Activated B cell treated with CpG ODN at 0.5 μM for 24 hours (primary cell): ENCODE measurements at regions of chr4 and their contacts with region 1.

Region 1: DNA sequence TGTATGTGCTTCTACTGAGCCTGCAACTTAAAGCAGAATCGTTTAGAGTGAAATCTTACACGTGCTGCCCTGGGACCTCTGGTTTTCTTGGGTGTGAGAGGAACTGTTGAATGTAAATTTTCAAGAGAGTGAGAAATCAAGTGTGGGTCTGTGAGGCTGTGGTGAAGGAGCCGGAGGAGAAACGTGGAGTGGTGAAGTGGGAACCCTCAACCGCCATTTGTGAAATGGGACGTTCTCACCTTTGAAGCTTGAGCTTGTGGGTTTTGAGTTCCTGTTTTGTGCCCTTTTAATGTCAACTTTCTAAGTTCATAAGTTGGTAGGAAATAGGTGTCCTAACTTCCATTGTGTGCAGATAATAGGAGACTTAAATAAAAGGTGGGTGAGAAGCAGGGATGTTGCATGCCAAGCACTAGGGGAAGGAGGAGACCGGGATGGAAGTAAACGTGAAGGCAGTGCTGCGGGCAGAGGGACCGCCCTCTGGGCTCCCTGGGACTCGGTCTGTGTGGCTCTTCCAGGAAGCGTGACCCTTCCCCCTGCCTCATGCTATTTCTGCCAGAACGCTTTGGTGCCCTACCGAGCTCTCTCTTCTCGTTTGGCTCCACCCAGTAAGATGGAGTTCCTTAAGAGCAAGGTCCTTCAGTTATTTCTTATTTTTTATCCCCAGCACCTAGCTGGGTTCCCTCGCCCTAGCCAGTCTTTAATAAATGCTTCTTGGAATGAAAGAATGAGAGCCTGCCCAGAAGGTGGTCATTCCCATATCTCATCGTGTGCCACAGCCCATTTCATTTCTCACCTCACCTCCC is 56.0 kb downstream of the TMEM131L start:
- DNase-seq: no peak
- ATAC-seq: peak; percentile 25
- H3K4me3 Mint-ChIP-seq: peak overlapping the region; percentile 71
- H3K27ac Mint-ChIP-seq: peak overlapping the region; percentile 90
- H3K4me1 Mint-ChIP-seq: peaks cover 99% of the 10 kb centered on the region
- H3K27me3 Mint-ChIP-seq: no peaks in the 10 kb centered on the region
- CTCF ChIP-seq: no peak

Region 2: DNA sequence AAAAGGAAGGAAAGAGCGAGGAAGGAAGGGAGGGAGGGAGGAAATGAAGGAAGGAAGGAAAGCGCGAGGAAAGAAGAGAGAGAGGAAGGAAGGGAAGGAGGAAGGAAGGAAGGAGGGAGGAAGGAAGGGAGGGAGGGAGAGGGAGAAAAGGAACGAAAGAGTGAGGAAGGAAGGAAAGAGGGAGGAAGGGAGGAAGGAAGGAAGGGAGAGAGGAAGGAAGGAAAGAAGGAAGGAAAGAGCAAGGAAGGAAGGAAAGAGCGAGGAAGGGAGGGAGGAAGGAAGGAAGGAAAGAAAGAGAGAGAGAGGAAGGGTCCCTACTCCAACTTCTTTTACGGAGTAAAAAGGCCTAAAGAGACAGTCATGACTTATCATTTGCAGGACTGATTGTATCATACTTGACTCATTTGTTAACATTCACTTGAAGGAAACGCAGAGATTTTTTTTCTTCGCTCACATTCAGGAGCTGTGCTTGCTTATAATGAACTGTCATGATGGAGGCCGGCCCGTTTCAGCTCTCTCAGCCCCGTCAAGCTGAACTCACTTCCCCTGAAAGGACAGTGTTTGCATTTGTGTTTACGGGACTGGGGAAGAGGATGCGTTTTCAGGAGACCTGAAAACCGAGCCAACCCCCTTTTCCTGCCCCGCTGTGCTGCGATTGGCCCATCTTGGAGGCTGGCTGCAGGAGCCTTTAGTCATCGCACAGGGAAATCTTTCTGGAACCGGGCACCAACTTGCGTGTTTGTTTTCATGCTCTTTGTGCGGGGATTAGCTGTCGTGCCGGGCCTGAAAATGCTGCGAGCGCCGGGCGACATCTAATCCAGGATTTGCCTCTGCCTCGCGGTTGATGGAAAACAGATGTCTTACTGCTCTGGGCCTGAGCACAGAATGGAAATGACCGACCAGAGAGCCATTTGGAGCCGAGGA is 300.2 kb before region 1 on chr4:
- CTCF ChIA-PET with region 1: no interaction called
- POLR2A ChIA-PET with region 1: no interaction called
- intact Hi-C with region 1: loop called (anchors 5 kb)
- DNase-seq: peak; percentile 30
- ATAC-seq: peak; percentile 49
- H3K4me3 Mint-ChIP-seq: peak overlapping the region; percentile 89
- H3K27ac Mint-ChIP-seq: peak overlapping the region; percentile 73
- H3K4me1 Mint-ChIP-seq: peaks cover 37% of the 10 kb centered on the region
- H3K27me3 Mint-ChIP-seq: peaks cover 4% of the 10 kb centered on the region
- CTCF ChIP-seq: no peak

Region 3: DNA sequence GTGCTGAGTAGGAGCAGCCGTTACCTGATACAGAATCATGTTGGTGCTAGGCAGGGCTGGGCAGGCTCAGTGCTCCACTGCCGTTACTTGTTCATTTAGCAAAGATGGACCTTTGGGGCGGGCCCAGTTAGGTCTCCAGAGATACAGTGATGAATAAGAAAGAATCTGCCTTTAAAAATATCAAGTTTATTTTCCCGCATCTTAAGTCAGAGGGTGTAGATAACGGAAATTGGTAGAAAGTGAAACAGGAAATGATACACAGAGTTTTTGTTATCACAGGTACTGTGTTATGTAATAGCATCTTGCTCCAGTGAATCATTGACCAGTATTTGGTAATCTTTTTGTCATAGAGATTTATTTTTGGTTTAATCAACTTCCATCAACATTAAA is 50.5 kb before region 1 on chr4:
- CTCF ChIA-PET with region 1: interaction called, 6 read pairs
- POLR2A ChIA-PET with region 1: interaction called, 41 read pairs
- intact Hi-C with region 1: loop called (anchors 1 kb)
- DNase-seq: no peak
- ATAC-seq: peak; percentile 35
- H3K4me3 Mint-ChIP-seq: peak overlapping the region; percentile 97
- H3K27ac Mint-ChIP-seq: peak overlapping the region; percentile 98
- H3K4me1 Mint-ChIP-seq: peaks cover 89% of the 10 kb centered on the region
- H3K27me3 Mint-ChIP-seq: no peaks in the 10 kb centered on the region
- CTCF ChIP-seq: no peak

Region 4: GRCh38 chr4:153488006-153488891 is 34.0 kb before region 1 on chr4:
- CTCF ChIA-PET with region 1: no interaction called
- POLR2A ChIA-PET with region 1: interaction called, 9 read pairs
- intact Hi-C with region 1: loop called (anchors 1 kb)
- DNase-seq: peak; percentile 62
- ATAC-seq: peak; percentile 76
- H3K4me3 Mint-ChIP-seq: peak overlapping the region; percentile 78
- H3K27ac Mint-ChIP-seq: peak overlapping the region; percentile 92
- H3K4me1 Mint-ChIP-seq: peaks cover 89% of the 10 kb centered on the region
- H3K27me3 Mint-ChIP-seq: no peaks in the 10 kb centered on the region
- CTCF ChIP-seq: no peak

Region 5: GRCh38 chr4:153497988-153498967 is 23.9 kb before region 1 on chr4:
- CTCF ChIA-PET with region 1: interaction called, 7 read pairs
- POLR2A ChIA-PET with region 1: interaction called, 13 read pairs
- intact Hi-C with region 1: loop called (anchors 1 kb)
- DNase-seq: no peak
- ATAC-seq: peak; percentile 79
- H3K4me3 Mint-ChIP-seq: peak overlapping the region; percentile 73
- H3K27ac Mint-ChIP-seq: peak overlapping the region; percentile 80
- H3K4me1 Mint-ChIP-seq: peaks cover 94% of the 10 kb centered on the region
- H3K27me3 Mint-ChIP-seq: no peaks in the 10 kb centered on the region
- CTCF ChIP-seq: no peak

Region 6: GRCh38 chr4:153541456-153542096 is 19.4 kb after region 1 on chr4:
- CTCF ChIA-PET with region 1: interaction called, 8 read pairs
- POLR2A ChIA-PET with region 1: interaction called, 6 read pairs
- intact Hi-C with region 1: loop called (anchors 2 kb)
- DNase-seq: no peak
- ATAC-seq: peak; percentile 21
- H3K4me3 Mint-ChIP-seq: no peak overlapping the region
- H3K27ac Mint-ChIP-seq: peak overlapping the region; percentile 11
- H3K4me1 Mint-ChIP-seq: peaks cover 85% of the 10 kb centered on the region
- H3K27me3 Mint-ChIP-seq: no peaks in the 10 kb centered on the region
- CTCF ChIP-seq: no peak

Region 7: GRCh38 chr4:153573881-153574802 is 51.9 kb after region 1 on chr4:
- CTCF ChIA-PET with region 1: interaction called, 3 read pairs
- POLR2A ChIA-PET with region 1: interaction called, 6 read pairs
- intact Hi-C with region 1: loop called (anchors 2 kb)
- DNase-seq: no peak
- ATAC-seq: peak; percentile 78
- H3K4me3 Mint-ChIP-seq: peak overlapping the region; percentile 32
- H3K27ac Mint-ChIP-seq: peak overlapping the region; percentile 82
- H3K4me1 Mint-ChIP-seq: peaks cover 77% of the 10 kb centered on the region
- H3K27me3 Mint-ChIP-seq: no peaks in the 10 kb centered on the region
- CTCF ChIP-seq: no peak